Panc1 (cell line): ENCODE measurements at regions of chr12 and their contacts with region 1.

Region 1: GRCh38 chr12:60169904-60170303 is 574.1 kb downstream of the SLC16A7 start:
- DNase-seq: no peak
- ATAC-seq: no peak
- H3K4me3 ChIP-seq: no peak overlapping the region
- H3K27ac ChIP-seq: no peak overlapping the region
- H3K4me1 ChIP-seq: peaks cover 5% of the 10 kb centered on the region; the same call in 1 of the 2 replicates
- H3K27me3 ChIP-seq: no peaks in the 10 kb centered on the region
- CTCF ChIP-seq: no peak

Region 2: GRCh38 chr12:59444932-59445331 is 725.0 kb before region 1 on chr12:
- CTCF ChIA-PET with region 1: interaction called, 12 read pairs
- POLR2A ChIA-PET with region 1: no interaction called
- in situ Hi-C with region 1: no loop called
- intact Hi-C with region 1: no loop called
- DNase-seq: no peak
- ATAC-seq: no peak
- H3K4me3 ChIP-seq: no peak overlapping the region
- H3K27ac ChIP-seq: no peak overlapping the region
- H3K4me1 ChIP-seq: no peaks in the 10 kb centered on the region
- H3K27me3 ChIP-seq: no peaks in the 10 kb centered on the region
- CTCF ChIP-seq: no peak

Region 3: GRCh38 chr12:60101652-60102108 is 68.2 kb before region 1 on chr12:
- CTCF ChIA-PET with region 1: no interaction called
- POLR2A ChIA-PET with region 1: no interaction called
- in situ Hi-C with region 1: no loop called
- intact Hi-C with region 1: no loop called
- DNase-seq: no peak
- ATAC-seq: no peak
- H3K4me3 ChIP-seq: no peak overlapping the region
- H3K27ac ChIP-seq: no peak overlapping the region
- H3K4me1 ChIP-seq: no peaks in the 10 kb centered on the region
- H3K27me3 ChIP-seq: no peaks in the 10 kb centered on the region
- CTCF ChIP-seq: no peak